ENCODE measurements at regions of chr12 and their contacts with region 1.

Region 1: GRCh38 chr12:96516472-96517430 is 27.4 kb downstream of the CFAP54 start:
- DNase-seq: peak; percentile 94
- ATAC-seq: peak; percentile 83
- H3K4me3 Mint-ChIP-seq: peak overlapping the region; percentile 21
- H3K27ac Mint-ChIP-seq: peak overlapping the region; percentile 64
- H3K4me1 Mint-ChIP-seq: peaks cover 17% of the 10 kb centered on the region
- H3K27me3 Mint-ChIP-seq: no peaks in the 10 kb centered on the region

Region 2: GRCh38 chr12:95858479-95859343 is 658.0 kb before region 1 on chr12 and contains the start of gene SNRPF:
- CTCF ChIA-PET with region 1: no interaction called
- POLR2A ChIA-PET with region 1: no interaction called
- intact Hi-C with region 1: loop called in 1 of 2 experiments (anchors 2 kb)
- DNase-seq: peak; percentile 95
- ATAC-seq: peak; percentile 95
- H3K4me3 Mint-ChIP-seq: no peak within 1 kb of the TSS
- H3K27ac Mint-ChIP-seq: peak within 1 kb of the TSS; percentile 59
- H3K4me1 Mint-ChIP-seq: peaks cover 28% of the 10 kb centered on the region
- H3K27me3 Mint-ChIP-seq: peaks cover 3% of the 10 kb centered on the region
- total RNA-seq, gene SNRPF: 23.1 to 61.1 TPM

Region 3: DNA sequence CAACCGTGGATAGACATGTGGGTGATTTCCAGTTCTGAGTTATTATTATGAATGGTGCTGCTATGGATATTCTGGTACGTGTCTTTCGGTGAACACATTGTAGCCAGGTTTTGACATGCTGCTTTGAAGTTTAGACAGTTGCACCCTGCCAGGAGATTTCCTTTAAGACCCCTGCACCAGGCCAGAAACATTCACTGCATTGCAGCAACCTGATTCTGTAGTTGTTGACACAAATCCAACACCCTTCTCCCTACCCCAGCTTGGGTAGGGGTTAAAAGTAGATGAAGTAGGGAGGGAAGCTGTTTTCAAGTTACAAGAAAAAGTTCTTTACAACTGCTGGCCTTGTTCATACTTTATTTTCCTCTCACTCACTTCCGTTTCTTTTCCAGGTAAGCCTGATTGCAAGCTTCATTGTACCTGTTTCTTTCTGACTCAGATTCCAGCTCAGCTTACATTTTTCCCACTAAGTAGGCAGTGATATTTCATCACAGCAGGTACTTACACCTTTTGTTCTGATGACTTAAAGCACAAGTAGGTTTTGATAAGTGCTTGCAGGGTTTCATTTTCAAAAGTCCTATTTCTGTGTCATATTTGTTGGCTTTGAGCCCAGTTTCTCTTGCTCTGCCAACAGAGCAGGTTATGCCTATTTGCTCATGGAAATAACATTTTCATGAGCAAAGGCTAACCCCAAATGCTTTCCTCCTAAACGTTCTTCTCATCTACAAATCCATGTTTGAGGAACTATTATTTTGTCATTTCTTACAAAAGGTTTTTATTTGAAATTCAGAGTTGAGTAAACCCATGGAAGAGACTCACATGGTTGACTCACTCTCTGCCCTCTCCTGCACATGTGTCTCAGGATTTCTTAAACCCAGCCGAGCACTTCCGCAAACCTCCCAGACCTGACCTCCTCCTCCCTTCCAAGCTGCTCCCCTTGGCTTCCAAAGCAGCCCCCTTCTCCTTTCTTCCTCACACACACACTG is 469.2 kb before region 1 on chr12:
- CTCF ChIA-PET with region 1: no interaction called
- POLR2A ChIA-PET with region 1: no interaction called
- intact Hi-C with region 1: loop called in 1 of 2 experiments (anchors 5 kb)
- DNase-seq: peak; percentile 30
- ATAC-seq: peak; percentile 83
- H3K4me3 Mint-ChIP-seq: peak overlapping the region; percentile 20
- H3K27ac Mint-ChIP-seq: peak overlapping the region; percentile 92
- H3K4me1 Mint-ChIP-seq: peaks cover 58% of the 10 kb centered on the region
- H3K27me3 Mint-ChIP-seq: no peaks in the 10 kb centered on the region

Region 4: GRCh38 chr12:96208801-96209549 is 307.8 kb before region 1 on chr12:
- CTCF ChIA-PET with region 1: interaction called, 14 read pairs
- POLR2A ChIA-PET with region 1: no interaction called
- intact Hi-C with region 1: loop called in 1 of 2 experiments (anchors 2 kb)
- DNase-seq: no peak
- ATAC-seq: no peak
- H3K4me3 Mint-ChIP-seq: peak overlapping the region; percentile 3
- H3K27ac Mint-ChIP-seq: peak overlapping the region; percentile 98
- H3K4me1 Mint-ChIP-seq: peaks cover 99% of the 10 kb centered on the region
- H3K27me3 Mint-ChIP-seq: no peaks in the 10 kb centered on the region

Region 5: GRCh38 chr12:96489103-96490056 is 27.4 kb before region 1 on chr12 and contains the start of gene CFAP54:
- CTCF ChIA-PET with region 1: interaction called, 21 read pairs
- POLR2A ChIA-PET with region 1: interaction called, 4 read pairs
- intact Hi-C with region 1: loop called (anchors 1 kb)
- DNase-seq: peak; percentile 97
- ATAC-seq: peak; percentile 86
- H3K4me3 Mint-ChIP-seq: peak within 1 kb of the TSS; percentile 80
- H3K27ac Mint-ChIP-seq: peak within 1 kb of the TSS; percentile 66
- H3K4me1 Mint-ChIP-seq: peaks cover 33% of the 10 kb centered on the region
- H3K27me3 Mint-ChIP-seq: no peaks in the 10 kb centered on the region
- total RNA-seq, gene CFAP54: 0.37 to 0.44 TPM

Measured in activated CD4-positive, alpha-beta T cell treated with anti-CD3 and anti-CD28 coated beads for 36 hours (primary cell).